CD8-positive, alpha-beta memory T cell (primary cell): ENCODE measurements at regions of chr2 and their contacts with region 1.

Region 1: GRCh38 chr2:98465456-98466226 is 21.0 kb downstream of the INPP4A start:
- DNase-seq: peak; percentile 69 to 91 (median 86)
- H3K4me3 ChIP-seq: peak overlapping the region; percentile 47
- H3K4me3 Mint-ChIP-seq: peak overlapping the region; percentile 70 to 92 (median 85)
- H3K27ac ChIP-seq: peak overlapping the region; percentile 60
- H3K27ac Mint-ChIP-seq: peak overlapping the region; percentile 91 to 100 (median 96)
- H3K4me1 ChIP-seq: peaks cover 92% of the 10 kb centered on the region
- H3K4me1 Mint-ChIP-seq: peaks cover 82 to 94% (median 93%) of the 10 kb centered on the region in 3 donors
- H3K27me3 ChIP-seq: no peaks in the 10 kb centered on the region
- H3K27me3 Mint-ChIP-seq: peaks cover 0 to 4% of the 10 kb centered on the region in 2 donors

Region 2: GRCh38 chr2:98444436-98445176 is 21.0 kb before region 1 on chr2 and contains the start of gene INPP4A:
- CTCF ChIA-PET with region 1: interaction called, 26 read pairs
- POLR2A ChIA-PET with region 1: interaction called, 30 read pairs
- DNase-seq: peak; percentile 66 to 86 (median 77)
- H3K4me3 ChIP-seq: peak within 1 kb of the TSS; percentile 75
- H3K4me3 Mint-ChIP-seq: peak within 1 kb of the TSS; percentile 92 to 98 (median 95)
- H3K27ac ChIP-seq: peak within 1 kb of the TSS; percentile 75
- H3K27ac Mint-ChIP-seq: peak within 1 kb of the TSS; percentile 93 to 99 (median 98)
- H3K4me1 ChIP-seq: peaks cover 33% of the 10 kb centered on the region
- H3K4me1 Mint-ChIP-seq: peaks cover 44 to 58% (median 50%) of the 10 kb centered on the region in 3 donors
- H3K27me3 ChIP-seq: no peaks in the 10 kb centered on the region
- H3K27me3 Mint-ChIP-seq: peaks cover 0 to 2% of the 10 kb centered on the region in 2 donors
- total RNA-seq, gene INPP4A: 41.0 to 46.9 TPM

Region 3: DNA sequence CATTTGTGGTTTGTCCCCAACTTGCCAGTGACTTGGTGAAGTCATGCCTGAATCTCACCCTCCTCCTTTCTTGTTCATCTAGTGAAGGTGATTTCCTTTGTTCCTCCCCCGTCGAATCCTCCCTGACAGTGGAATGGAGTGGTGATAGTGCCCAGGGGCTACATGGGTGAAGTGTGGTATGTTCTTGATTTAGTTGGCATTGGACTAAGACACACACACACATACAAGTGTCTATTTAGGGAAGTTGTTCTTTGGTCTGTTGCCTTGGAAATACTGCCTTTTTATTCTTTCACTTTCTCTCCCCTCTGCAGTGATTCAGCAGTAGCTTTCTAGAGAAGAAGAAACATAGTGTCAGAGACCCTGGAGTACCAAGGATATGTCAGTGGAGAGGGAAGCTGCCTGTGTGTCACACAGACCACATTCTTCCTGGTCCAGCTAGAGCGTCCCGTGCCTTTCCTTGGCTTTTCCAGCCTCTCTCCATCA is 10.1 kb before region 1 on chr2:
- CTCF ChIA-PET with region 1: interaction called, 14 read pairs
- POLR2A ChIA-PET with region 1: interaction called, 15 read pairs
- DNase-seq: peak in 3 of 5 donors; percentile 53 to 66 (median 59)
- H3K4me3 ChIP-seq: peak overlapping the region; percentile 15
- H3K4me3 Mint-ChIP-seq: peak overlapping the region; percentile 37 to 85 (median 68)
- H3K27ac ChIP-seq: peak overlapping the region; percentile 64
- H3K27ac Mint-ChIP-seq: peak overlapping the region; percentile 91 to 98 (median 94)
- H3K4me1 ChIP-seq: peaks cover 98% of the 10 kb centered on the region
- H3K4me1 Mint-ChIP-seq: peaks cover 90 to 100% (median 98%) of the 10 kb centered on the region in 3 donors
- H3K27me3 ChIP-seq: no peaks in the 10 kb centered on the region
- H3K27me3 Mint-ChIP-seq: no peaks in the 10 kb centered on the region

Region 4: DNA sequence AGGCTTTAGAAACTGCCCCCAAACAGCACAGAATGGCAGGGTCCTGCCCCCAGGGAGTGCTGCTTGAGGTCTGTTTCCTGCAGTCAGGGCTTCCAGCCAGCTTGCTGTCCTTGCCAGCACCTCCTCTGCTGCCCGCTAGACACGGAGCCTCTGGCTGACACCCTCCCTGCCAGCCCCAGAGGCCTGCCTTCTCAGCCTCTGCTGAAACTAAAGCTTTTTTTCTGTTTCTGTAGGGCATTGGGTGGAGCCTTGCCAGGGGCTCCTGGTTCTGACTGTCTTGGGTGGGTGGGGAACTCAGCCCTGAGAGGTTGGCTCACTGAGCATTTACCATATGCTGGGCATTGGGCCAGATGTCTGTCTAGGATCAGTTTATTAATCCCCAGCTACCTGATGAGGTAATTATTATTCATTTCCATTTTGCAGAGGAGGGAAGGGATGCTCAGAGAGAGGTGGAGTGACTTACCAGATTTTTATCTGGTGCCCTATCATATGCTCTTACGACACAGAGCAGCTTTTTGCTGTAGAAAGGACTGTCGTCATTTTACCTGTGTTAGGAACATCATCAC is 14.4 kb after region 1 on chr2:
- CTCF ChIA-PET with region 1: interaction called, 48 read pairs
- POLR2A ChIA-PET with region 1: interaction called, 4 read pairs
- DNase-seq: peak in 3 of 5 donors; percentile 33 to 38 (median 35)
- H3K4me3 ChIP-seq: peak overlapping the region; percentile 16
- H3K4me3 Mint-ChIP-seq: peak overlapping the region; percentile 20 to 72 (median 50)
- H3K27ac ChIP-seq: no peak overlapping the region
- H3K27ac Mint-ChIP-seq: peak overlapping the region; percentile 56 to 95 (median 90)
- H3K4me1 ChIP-seq: peaks cover 100% of the 10 kb centered on the region
- H3K4me1 Mint-ChIP-seq: peaks cover 92 to 100% (median 100%) of the 10 kb centered on the region in 3 donors
- H3K27me3 ChIP-seq: no peaks in the 10 kb centered on the region
- H3K27me3 Mint-ChIP-seq: no peaks in the 10 kb centered on the region

Region 5: GRCh38 chr2:98487806-98488651 is 22.4 kb after region 1 on chr2:
- CTCF ChIA-PET with region 1: interaction called, 48 read pairs
- POLR2A ChIA-PET with region 1: interaction called, 9 read pairs
- DNase-seq: peak in 4 of 5 donors; percentile 30 to 71 (median 50)
- H3K4me3 ChIP-seq: no peak overlapping the region
- H3K4me3 Mint-ChIP-seq: peak overlapping the region in 6 of 7 donors; percentile 5 to 63 (median 26)
- H3K27ac ChIP-seq: no peak overlapping the region
- H3K27ac Mint-ChIP-seq: peak overlapping the region; percentile 1 to 94 (median 82)
- H3K4me1 ChIP-seq: peaks cover 80% of the 10 kb centered on the region
- H3K4me1 Mint-ChIP-seq: peaks cover 90 to 100% (median 98%) of the 10 kb centered on the region in 3 donors
- H3K27me3 ChIP-seq: no peaks in the 10 kb centered on the region
- H3K27me3 Mint-ChIP-seq: no peaks in the 10 kb centered on the region

Region 6: GRCh38 chr2:98583816-98584618 is 118.4 kb after region 1 on chr2:
- CTCF ChIA-PET with region 1: no interaction called
- POLR2A ChIA-PET with region 1: no interaction called
- DNase-seq: no peak
- H3K4me3 ChIP-seq: no peak overlapping the region
- H3K4me3 Mint-ChIP-seq: no peak overlapping the region
- H3K27ac ChIP-seq: no peak overlapping the region
- H3K27ac Mint-ChIP-seq: no peak overlapping the region
- H3K4me1 ChIP-seq: no peaks in the 10 kb centered on the region
- H3K4me1 Mint-ChIP-seq: peaks cover 0 to 3% (median 2%) of the 10 kb centered on the region in 3 donors
- H3K27me3 ChIP-seq: no peaks in the 10 kb centered on the region
- H3K27me3 Mint-ChIP-seq: no peaks in the 10 kb centered on the region